Activated CD4-positive, alpha-beta T cell treated with anti-CD3 and anti-CD28 coated beads for 36 hours (primary cell): ENCODE measurements at regions of chr3 and their contacts with region 1.

Region 1: GRCh38 chr3:72977060-72977808 is 19.4 kb upstream of the PPP4R2 start:
- DNase-seq: peak; percentile 52
- ATAC-seq: peak; percentile 84
- H3K4me3 Mint-ChIP-seq: no peak overlapping the region
- H3K27ac Mint-ChIP-seq: peak overlapping the region; percentile 84
- H3K4me1 Mint-ChIP-seq: peaks cover 19% of the 10 kb centered on the region
- H3K27me3 Mint-ChIP-seq: peaks cover 3% of the 10 kb centered on the region

Region 2: DNA sequence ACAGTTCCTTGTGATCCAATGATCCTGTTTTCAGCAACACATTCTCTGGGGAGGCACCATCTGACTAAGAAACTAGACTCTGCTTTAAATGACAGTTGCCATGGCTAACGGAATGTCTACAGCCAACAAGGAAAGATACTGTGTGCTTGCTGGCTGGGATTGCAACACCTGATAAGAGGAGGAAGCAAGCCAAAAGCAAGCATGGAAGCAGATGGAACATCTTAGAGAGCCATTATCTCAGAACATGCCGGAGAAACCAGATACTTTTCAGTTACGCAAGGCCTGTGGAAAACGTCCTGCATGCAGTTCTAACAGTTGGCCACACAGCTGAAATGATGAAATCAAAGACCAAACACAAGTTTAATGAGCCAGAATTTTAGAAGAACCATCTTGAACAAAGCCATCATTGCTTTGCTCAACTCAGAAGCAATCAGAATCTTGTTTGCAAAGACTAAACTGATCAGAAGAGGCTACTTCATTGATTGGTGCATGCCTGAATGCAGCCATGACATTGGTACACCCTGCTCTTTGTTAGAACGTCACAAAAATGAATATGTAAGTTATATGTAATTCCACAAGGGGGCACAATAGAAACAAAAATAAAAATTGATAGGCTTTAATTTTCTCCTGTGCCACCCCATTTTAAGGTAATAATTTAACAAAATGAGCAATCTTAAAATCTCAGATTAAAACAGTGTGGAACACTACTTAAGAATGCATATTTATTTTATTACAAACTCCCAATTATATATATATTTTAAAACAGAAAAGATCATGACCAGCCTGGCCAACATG is 38.6 kb before region 1 on chr3:
- CTCF ChIA-PET with region 1: interaction called, 3 read pairs
- POLR2A ChIA-PET with region 1: no interaction called
- intact Hi-C with region 1: loop called in 1 of 2 experiments (anchors 2 kb)
- DNase-seq: peak; percentile 44
- ATAC-seq: peak; percentile 98
- H3K4me3 Mint-ChIP-seq: no peak overlapping the region
- H3K27ac Mint-ChIP-seq: no peak overlapping the region
- H3K4me1 Mint-ChIP-seq: no peaks in the 10 kb centered on the region
- H3K27me3 Mint-ChIP-seq: no peaks in the 10 kb centered on the region

Region 3: GRCh38 chr3:72951259-72951722 is 25.9 kb before region 1 on chr3:
- CTCF ChIA-PET with region 1: no interaction called
- POLR2A ChIA-PET with region 1: no interaction called
- intact Hi-C with region 1: loop called in 1 of 2 experiments (anchors 2 kb)
- DNase-seq: no peak
- ATAC-seq: peak; percentile 86
- H3K4me3 Mint-ChIP-seq: no peak overlapping the region
- H3K27ac Mint-ChIP-seq: no peak overlapping the region
- H3K4me1 Mint-ChIP-seq: peaks cover 14% of the 10 kb centered on the region
- H3K27me3 Mint-ChIP-seq: no peaks in the 10 kb centered on the region

Region 4: DNA sequence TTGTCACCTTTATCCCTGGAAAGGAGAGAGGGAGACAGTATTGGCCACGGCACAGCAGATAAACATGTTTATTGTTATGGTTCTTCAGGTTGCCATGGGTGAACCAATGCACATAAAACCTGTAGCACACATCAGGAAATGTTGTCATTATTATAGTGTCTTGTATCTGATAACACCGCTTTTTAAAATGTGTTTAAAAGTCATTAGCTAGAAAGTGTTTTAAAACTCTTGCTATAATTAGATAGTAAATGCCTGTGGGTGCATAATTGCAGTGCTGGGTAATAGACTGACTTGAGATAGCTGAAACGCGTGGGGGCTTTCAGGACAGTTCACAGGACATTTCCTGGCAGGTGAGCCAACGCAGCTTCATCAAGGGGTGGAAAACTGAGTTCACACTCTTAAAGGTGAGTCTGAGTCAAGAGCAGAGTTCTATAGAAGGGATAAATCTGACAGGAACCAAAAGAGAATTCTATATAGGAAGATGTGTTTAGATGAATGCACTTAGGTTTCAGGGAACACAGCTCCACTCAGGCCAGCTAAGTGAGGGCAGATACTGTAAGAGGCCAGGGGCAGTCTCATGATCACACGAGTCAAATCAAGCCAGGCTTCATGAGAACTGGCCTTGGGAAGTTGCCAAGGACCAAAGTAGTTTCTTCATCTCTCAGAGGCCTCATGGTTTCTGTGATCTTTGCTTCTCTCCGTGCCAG is 16.3 kb before region 1 on chr3:
- CTCF ChIA-PET with region 1: interaction called, 7 read pairs
- POLR2A ChIA-PET with region 1: no interaction called
- intact Hi-C with region 1: loop called in 1 of 2 experiments (anchors 1 kb)
- DNase-seq: peak; percentile 38
- ATAC-seq: peak; percentile 51
- H3K4me3 Mint-ChIP-seq: no peak overlapping the region
- H3K27ac Mint-ChIP-seq: peak overlapping the region; percentile 52
- H3K4me1 Mint-ChIP-seq: peaks cover 35% of the 10 kb centered on the region
- H3K27me3 Mint-ChIP-seq: no peaks in the 10 kb centered on the region

Region 5: GRCh38 chr3:72996473-72997333 is 19.5 kb after region 1 on chr3 and contains the start of gene PPP4R2:
- CTCF ChIA-PET with region 1: interaction called, 5 read pairs
- POLR2A ChIA-PET with region 1: no interaction called
- intact Hi-C with region 1: loop called (anchors 1 kb)
- DNase-seq: peak; percentile 94
- ATAC-seq: peak; percentile 88
- H3K4me3 Mint-ChIP-seq: peak within 1 kb of the TSS; percentile 85
- H3K27ac Mint-ChIP-seq: peak within 1 kb of the TSS; percentile 93
- H3K4me1 Mint-ChIP-seq: peaks cover 35% of the 10 kb centered on the region
- H3K27me3 Mint-ChIP-seq: no peaks in the 10 kb centered on the region
- total RNA-seq, gene PPP4R2: 75.1 to 91.5 TPM

Region 6: DNA sequence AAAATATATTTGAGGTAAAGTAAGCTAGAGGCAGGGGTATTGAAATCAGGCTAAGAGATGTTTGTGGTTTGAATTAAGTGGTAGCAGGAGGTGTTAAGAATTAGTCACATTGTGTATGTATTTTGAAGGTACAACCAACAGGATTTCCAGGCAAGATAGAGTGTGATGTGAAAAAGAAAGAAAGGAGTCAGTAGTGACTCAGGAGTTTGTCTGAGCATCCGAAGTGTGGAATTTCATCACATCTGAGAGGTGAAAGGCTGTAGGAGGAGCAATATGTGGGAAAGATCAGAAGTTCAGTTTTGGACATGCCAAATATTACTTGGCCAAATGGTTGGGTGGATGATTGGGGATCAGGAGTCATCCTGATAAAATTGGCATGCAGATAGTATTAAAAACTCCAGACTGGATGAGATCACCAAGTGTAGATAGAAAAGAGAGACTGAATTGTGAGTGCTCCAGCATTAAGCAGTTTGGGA is 52.1 kb after region 1 on chr3:
- CTCF ChIA-PET with region 1: no interaction called
- POLR2A ChIA-PET with region 1: no interaction called
- intact Hi-C with region 1: loop called in 1 of 2 experiments (anchors 1 kb)
- DNase-seq: no peak
- ATAC-seq: peak; percentile 94
- H3K4me3 Mint-ChIP-seq: peak overlapping the region; percentile 2
- H3K27ac Mint-ChIP-seq: peak overlapping the region; percentile 82
- H3K4me1 Mint-ChIP-seq: peaks cover 89% of the 10 kb centered on the region
- H3K27me3 Mint-ChIP-seq: no peaks in the 10 kb centered on the region

Region 7: GRCh38 chr3:73115806-73116205 is 138.6 kb after region 1 on chr3:
- CTCF ChIA-PET with region 1: no interaction called
- POLR2A ChIA-PET with region 1: no interaction called
- intact Hi-C with region 1: no loop called
- DNase-seq: no peak
- ATAC-seq: no peak
- H3K4me3 Mint-ChIP-seq: no peak overlapping the region
- H3K27ac Mint-ChIP-seq: no peak overlapping the region
- H3K4me1 Mint-ChIP-seq: no peaks in the 10 kb centered on the region
- H3K27me3 Mint-ChIP-seq: no peaks in the 10 kb centered on the region

Region 8: GRCh38 chr3:73490453-73491286 is 513.4 kb after region 1 on chr3:
- CTCF ChIA-PET with region 1: no interaction called
- POLR2A ChIA-PET with region 1: no interaction called
- intact Hi-C with region 1: no loop called
- DNase-seq: no peak
- ATAC-seq: no peak
- H3K4me3 Mint-ChIP-seq: no peak overlapping the region
- H3K27ac Mint-ChIP-seq: no peak overlapping the region
- H3K4me1 Mint-ChIP-seq: no peaks in the 10 kb centered on the region
- H3K27me3 Mint-ChIP-seq: peaks cover 13% of the 10 kb centered on the region